ENCODE measurements at regions of chr13 and their contacts with region 1.

Region 1: GRCh38 chr13:37127691-37128241 is 22.3 kb upstream of the CSNK1A1L start:
- DNase-seq: peak; percentile 97
- H3K4me3 ChIP-seq: peak overlapping the region in 2 of 3 experiments; percentile 17 to 55
- H3K27ac ChIP-seq: peak overlapping the region; percentile 100
- H3K4me1 ChIP-seq: peaks cover 44% of the 10 kb centered on the region
- H3K27me3 ChIP-seq: no peaks in the 10 kb centered on the region
- CTCF ChIP-seq: no peak
- POLR2A ChIP-seq: no peak

Region 2: DNA sequence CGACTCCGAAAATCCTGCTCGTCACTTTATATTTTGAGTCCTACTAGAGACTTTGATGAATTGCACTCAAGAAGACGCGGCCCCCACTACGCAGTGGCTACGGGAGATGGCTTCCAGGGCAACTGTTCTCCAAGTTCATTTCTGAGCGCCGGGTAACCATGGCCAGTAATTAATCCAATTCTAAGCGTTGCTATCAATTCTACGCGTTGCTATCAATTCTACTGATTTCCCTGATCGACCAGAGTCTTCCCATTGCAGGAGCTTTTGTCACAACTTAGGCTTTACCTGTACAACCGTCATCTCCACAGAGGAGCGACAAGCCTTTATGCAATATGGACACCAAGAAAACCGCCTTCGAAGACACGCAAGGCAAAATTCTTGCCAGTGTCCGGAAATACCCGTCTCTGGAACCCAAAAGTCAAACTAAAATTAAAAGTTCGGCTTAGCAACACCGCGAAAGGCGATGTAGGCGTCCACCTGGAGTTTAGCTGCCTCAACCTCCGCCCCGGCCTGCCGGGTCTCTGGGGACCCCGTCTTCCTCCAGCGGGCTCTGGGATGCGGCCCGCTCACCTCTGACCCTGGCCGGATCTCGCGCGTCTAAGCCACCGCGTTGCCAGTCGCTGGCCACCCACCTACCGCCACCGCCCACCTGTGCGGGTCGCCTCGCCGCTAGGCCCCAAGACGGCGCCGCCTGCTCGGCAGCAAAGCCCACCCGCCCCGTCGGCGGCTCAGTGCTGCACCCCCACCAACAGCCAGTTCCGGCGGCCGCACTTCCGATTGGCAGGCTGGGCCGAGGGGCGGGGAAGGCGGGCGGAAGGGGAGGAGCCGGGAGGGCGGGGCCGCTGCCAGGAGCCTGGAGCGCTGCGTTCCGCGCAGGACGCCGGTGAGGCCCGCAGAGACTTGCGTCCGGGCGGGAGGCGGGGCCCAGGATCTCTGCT is 68.6 kb before region 1 on chr13 and contains the start of gene SUPT20H:
- CTCF ChIA-PET with region 1: no interaction called
- POLR2A ChIA-PET with region 1: no interaction called
- dilution Hi-C with region 1: no loop called
- intact Hi-C with region 1: loop called (anchors 1 kb)
- DNase-seq: peak; percentile 93
- H3K4me3 ChIP-seq: peak within 1 kb of the TSS; percentile 81 to 82 (median 81)
- H3K27ac ChIP-seq: peak within 1 kb of the TSS; percentile 92
- H3K4me1 ChIP-seq: peaks cover 6% of the 10 kb centered on the region
- H3K27me3 ChIP-seq: no peaks in the 10 kb centered on the region
- CTCF ChIP-seq: no peak
- POLR2A ChIP-seq: peak; percentile 73
- total RNA-seq, gene SUPT20H: 65.9 and 70.7 TPM in 2 replicates

Region 3: DNA sequence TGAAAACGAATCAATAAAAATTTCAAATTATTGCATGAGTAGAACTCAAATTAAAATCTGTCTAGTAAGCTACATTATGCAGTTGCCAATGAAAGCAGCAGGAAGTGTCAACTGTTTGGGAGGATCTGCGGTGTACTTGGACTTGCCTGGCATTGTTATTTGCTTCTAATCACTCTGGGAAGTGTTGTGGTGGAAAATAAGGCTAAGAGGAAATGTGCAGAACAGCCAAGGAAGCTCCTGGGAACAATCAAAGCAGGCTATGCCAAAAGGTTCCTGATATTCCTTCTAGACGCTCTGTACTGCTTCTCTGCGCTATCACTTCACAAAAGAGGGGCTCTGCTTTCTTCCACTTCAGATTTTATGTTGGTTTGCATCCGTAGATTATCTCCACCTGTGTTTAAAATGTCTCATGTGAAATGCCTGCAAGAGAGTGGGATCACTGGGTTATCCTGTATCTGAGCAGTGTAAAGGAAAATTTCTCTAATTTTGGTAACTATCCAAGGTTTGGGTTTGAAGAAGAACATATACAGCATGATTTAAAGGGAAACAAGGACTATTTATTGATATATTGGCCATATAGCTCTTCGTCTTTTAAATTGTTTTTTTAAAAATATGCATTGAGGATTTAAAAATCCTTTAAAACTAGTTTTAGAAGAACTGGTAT is 160.4 kb after region 1 on chr13:
- CTCF ChIA-PET with region 1: no interaction called
- POLR2A ChIA-PET with region 1: no interaction called
- dilution Hi-C with region 1: no loop called
- intact Hi-C with region 1: loop called (anchors 1 kb)
- DNase-seq: peak; percentile 93
- H3K4me3 ChIP-seq: no peak overlapping the region
- H3K27ac ChIP-seq: peak overlapping the region; percentile 42
- H3K4me1 ChIP-seq: peaks cover 21% of the 10 kb centered on the region
- H3K27me3 ChIP-seq: no peaks in the 10 kb centered on the region
- CTCF ChIP-seq: no peak
- POLR2A ChIP-seq: no peak

Region 4: GRCh38 chr13:37656247-37656940 is 528.6 kb after region 1 on chr13:
- CTCF ChIA-PET with region 1: no interaction called
- POLR2A ChIA-PET with region 1: no interaction called
- dilution Hi-C with region 1: no loop called
- intact Hi-C with region 1: loop called (anchors 2 kb)
- DNase-seq: peak; percentile 86
- H3K4me3 ChIP-seq: no peak overlapping the region
- H3K27ac ChIP-seq: peak overlapping the region; percentile 99
- H3K4me1 ChIP-seq: peaks cover 23% of the 10 kb centered on the region
- H3K27me3 ChIP-seq: no peaks in the 10 kb centered on the region
- CTCF ChIP-seq: no peak
- POLR2A ChIP-seq: no peak

Region 5: GRCh38 chr13:38349390-38350113 is 1221.8 kb after region 1 on chr13 and contains the start of gene UFM1:
- CTCF ChIA-PET with region 1: no interaction called
- POLR2A ChIA-PET with region 1: no interaction called
- dilution Hi-C with region 1: no loop called
- intact Hi-C with region 1: loop called (anchors 1 kb)
- DNase-seq: peak; percentile 96
- H3K4me3 ChIP-seq: peak within 1 kb of the TSS; percentile 61 to 95 (median 89)
- H3K27ac ChIP-seq: peak within 1 kb of the TSS; percentile 97
- H3K4me1 ChIP-seq: peaks cover 18% of the 10 kb centered on the region
- H3K27me3 ChIP-seq: no peaks in the 10 kb centered on the region
- CTCF ChIP-seq: no peak
- POLR2A ChIP-seq: peak; percentile 83
- total RNA-seq, gene UFM1: 41.0 and 51.5 TPM in 2 replicates